Activated CD4-positive, alpha-beta memory T cell treated with anti-CD3 and anti-CD28 coated beads for 36 hours (primary cell): ENCODE measurements at regions of chr1 and their contacts with region 1.

Region 1: GRCh38 chr1:173867753-173868265 is at the start of gene GAS5:
- DNase-seq: peak; percentile 100
- H3K4me3 Mint-ChIP-seq: peak within 1 kb of the TSS; percentile 99
- H3K27ac Mint-ChIP-seq: peak within 1 kb of the TSS; percentile 98
- H3K4me1 Mint-ChIP-seq: peaks cover 68% of the 10 kb centered on the region
- H3K27me3 Mint-ChIP-seq: peaks cover 3% of the 10 kb centered on the region
- total RNA-seq, gene GAS5: 913 to 929 TPM

Region 2: GRCh38 chr1:173476664-173477285 is 391.0 kb before region 1 on chr1:
- CTCF ChIA-PET with region 1: interaction called, 3 read pairs
- POLR2A ChIA-PET with region 1: interaction called, 15 read pairs
- intact Hi-C with region 1: loop called (anchors 1 kb)
- DNase-seq: peak; percentile 90
- H3K4me3 Mint-ChIP-seq: peak overlapping the region; percentile 84
- H3K27ac Mint-ChIP-seq: peak overlapping the region; percentile 90
- H3K4me1 Mint-ChIP-seq: peaks cover 53% of the 10 kb centered on the region
- H3K27me3 Mint-ChIP-seq: no peaks in the 10 kb centered on the region

Region 3: DNA sequence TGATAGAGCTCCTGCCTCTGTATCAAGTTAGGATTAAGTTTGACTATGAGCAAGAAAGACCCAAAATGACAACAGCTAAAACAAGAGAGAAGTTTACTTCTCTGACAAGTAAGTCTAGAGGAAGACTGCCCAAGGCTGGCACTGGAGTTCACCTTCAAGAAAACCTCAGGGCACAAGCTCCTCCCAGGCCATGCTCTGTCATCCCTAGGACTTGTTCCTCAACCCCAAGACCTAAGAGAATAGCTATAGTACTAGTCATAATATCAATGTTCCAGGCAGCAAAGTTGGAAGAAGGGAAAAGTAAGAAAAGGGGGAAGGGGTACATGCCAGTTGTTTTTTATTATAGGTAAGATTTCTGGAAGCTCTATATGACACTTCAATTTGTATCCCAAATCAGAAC is 69.7 kb before region 1 on chr1:
- CTCF ChIA-PET with region 1: no interaction called
- POLR2A ChIA-PET with region 1: no interaction called
- intact Hi-C with region 1: no loop called
- DNase-seq: no peak
- H3K4me3 Mint-ChIP-seq: no peak overlapping the region
- H3K27ac Mint-ChIP-seq: no peak overlapping the region
- H3K4me1 Mint-ChIP-seq: no peaks in the 10 kb centered on the region
- H3K27me3 Mint-ChIP-seq: no peaks in the 10 kb centered on the region

Region 4: DNA sequence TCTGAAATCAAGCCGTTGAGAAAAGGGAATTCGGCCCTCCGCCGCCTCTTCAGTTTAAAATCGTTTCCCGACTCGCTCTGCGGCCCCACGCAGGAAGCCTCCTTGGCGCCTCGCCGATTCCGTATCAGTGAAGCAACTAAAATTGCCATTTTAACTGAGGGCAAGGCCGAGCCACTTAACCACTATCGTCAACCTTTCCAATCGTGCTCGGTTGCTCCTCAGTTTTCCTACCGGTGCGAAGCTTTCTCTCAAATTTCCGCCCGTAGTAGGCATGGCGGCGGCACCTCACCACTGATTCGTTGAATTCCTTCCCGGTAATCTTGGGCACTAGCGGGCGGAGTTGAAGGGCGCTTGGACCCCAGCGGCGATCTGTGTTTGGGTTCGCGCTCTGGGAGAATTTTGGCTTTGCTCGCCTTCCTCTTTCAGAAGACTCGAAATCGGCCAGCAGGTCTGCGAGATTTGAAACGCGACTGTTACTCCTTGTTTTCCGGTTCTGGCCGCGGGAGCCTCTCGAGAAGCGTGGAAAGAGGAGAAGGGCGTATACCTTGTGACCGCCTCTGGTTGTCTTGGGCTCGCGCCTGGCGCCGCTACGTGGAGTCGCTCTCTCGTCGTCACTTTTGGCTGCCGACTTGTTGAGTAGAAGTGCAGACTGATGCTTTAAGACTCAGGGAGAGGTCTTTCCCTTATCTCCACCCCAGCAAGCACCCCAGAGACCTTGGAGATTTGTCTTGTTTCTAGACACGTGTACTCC is 43.3 kb before region 1 on chr1 and contains the starts of genes CENPL and DARS2:
- CTCF ChIA-PET with region 1: interaction called, 3 read pairs
- POLR2A ChIA-PET with region 1: interaction called, 25 read pairs
- intact Hi-C with region 1: loop called (anchors 1 kb)
- DNase-seq: peak; percentile 95
- H3K4me3 Mint-ChIP-seq: peak within 1 kb of the TSS; percentile 98
- H3K27ac Mint-ChIP-seq: peak within 1 kb of the TSS; percentile 99
- H3K4me1 Mint-ChIP-seq: peaks cover 45% of the 10 kb centered on the region
- H3K27me3 Mint-ChIP-seq: no peaks in the 10 kb centered on the region
- total RNA-seq, gene CENPL: 24.5 to 26.3 TPM
- total RNA-seq, gene DARS2: 43.1 to 43.6 TPM

Region 5: GRCh38 chr1:174022080-174022975 is 154.5 kb after region 1 on chr1 and contains the start of gene RC3H1:
- CTCF ChIA-PET with region 1: no interaction called
- POLR2A ChIA-PET with region 1: interaction called, 8 read pairs
- intact Hi-C with region 1: loop called (anchors 1 kb)
- DNase-seq: peak; percentile 94
- H3K4me3 Mint-ChIP-seq: peak within 1 kb of the TSS; percentile 97
- H3K27ac Mint-ChIP-seq: peak within 1 kb of the TSS; percentile 93
- H3K4me1 Mint-ChIP-seq: peaks cover 38% of the 10 kb centered on the region
- H3K27me3 Mint-ChIP-seq: no peaks in the 10 kb centered on the region
- total RNA-seq, gene RC3H1: 26.6 to 26.8 TPM

Region 6: GRCh38 chr1:174204697-174205308 is 337.0 kb after region 1 on chr1:
- CTCF ChIA-PET with region 1: no interaction called
- POLR2A ChIA-PET with region 1: no interaction called
- intact Hi-C with region 1: loop called (anchors 2 kb)
- DNase-seq: peak; percentile 47
- H3K4me3 Mint-ChIP-seq: peak overlapping the region; percentile 38
- H3K27ac Mint-ChIP-seq: peak overlapping the region; percentile 76
- H3K4me1 Mint-ChIP-seq: peaks cover 59% of the 10 kb centered on the region
- H3K27me3 Mint-ChIP-seq: no peaks in the 10 kb centered on the region